ENCODE measurements at regions of chr9 and their contacts with region 1.

Region 1: GRCh38 chr9:38026021-38026809 is 42.8 kb downstream of the SHB start:
- DNase-seq: peak; percentile 98
- H3K4me3 ChIP-seq: no peak overlapping the region
- H3K27ac ChIP-seq: peak overlapping the region; percentile 97
- H3K4me1 ChIP-seq: peaks cover 35% of the 10 kb centered on the region
- H3K27me3 ChIP-seq: no peaks in the 10 kb centered on the region
- CTCF ChIP-seq: no peak
- POLR2A ChIP-seq: no peak

Region 2: DNA sequence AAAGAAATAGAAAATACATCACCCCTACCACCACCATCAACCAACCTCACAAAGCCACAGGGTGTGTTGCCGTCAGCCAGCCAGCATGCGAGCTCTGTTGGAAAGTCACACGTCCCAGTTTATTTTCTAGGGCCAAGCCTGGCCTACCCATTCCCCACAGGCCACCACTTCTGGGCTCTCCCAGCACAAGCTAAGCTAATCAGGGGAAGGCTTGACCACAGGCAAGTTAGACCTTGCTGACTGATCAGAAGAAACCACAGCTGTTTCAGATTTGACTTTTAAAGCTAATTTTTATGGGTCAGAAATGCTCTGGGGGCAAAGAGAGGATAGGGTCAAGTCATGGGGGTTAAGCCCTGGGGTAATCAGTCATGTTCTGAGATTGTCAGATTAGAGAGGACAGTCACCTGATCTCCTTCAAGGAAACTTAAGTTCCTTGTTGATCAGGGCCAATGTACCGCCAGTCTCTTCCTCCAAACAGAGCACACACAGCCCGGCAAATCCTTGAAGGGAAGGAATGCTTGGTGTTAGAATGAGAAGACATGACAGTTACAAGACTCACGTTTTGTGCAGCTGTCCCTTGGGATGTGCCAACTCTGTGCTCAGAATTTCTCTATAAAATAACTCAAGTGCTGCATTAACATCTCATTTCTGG is 35.2 kb after region 1 on chr9:
- CTCF ChIA-PET with region 1: interaction called, 23 read pairs
- POLR2A ChIA-PET with region 1: no interaction called
- dilution Hi-C with region 1: no loop called
- intact Hi-C with region 1: loop called (anchors 1 kb)
- DNase-seq: no peak
- H3K4me3 ChIP-seq: no peak overlapping the region
- H3K27ac ChIP-seq: no peak overlapping the region
- H3K4me1 ChIP-seq: peaks cover 65% of the 10 kb centered on the region
- H3K27me3 ChIP-seq: no peaks in the 10 kb centered on the region
- CTCF ChIP-seq: no peak
- POLR2A ChIP-seq: no peak

Measured in endothelial cell of umbilical vein (primary cell).